ENCODE measurements at regions of chr3 and their contacts with region 1.

Region 1: GRCh38 chr3:188148318-188148717 is 5.6 kb upstream of the LPP start:
- DNase-seq: no peak
- ATAC-seq: no peak
- H3K4me3 ChIP-seq: no peak overlapping the region
- H3K27ac ChIP-seq: no peak overlapping the region
- H3K4me1 ChIP-seq: peaks cover 0 to 21% (median 8%) of the 10 kb centered on the region in 12 donors
- H3K27me3 ChIP-seq: no peaks in the 10 kb centered on the region
- CTCF ChIP-seq: no peak
- POLR2A ChIP-seq: no peak

Region 2: GRCh38 chr3:188067932-188068331 is 80.4 kb before region 1 on chr3:
- intact Hi-C with region 1: loop called in 2 of 10 experiments (anchors 5 kb)
- DNase-seq: no peak
- ATAC-seq: no peak
- H3K4me3 ChIP-seq: no peak overlapping the region
- H3K27ac ChIP-seq: no peak overlapping the region
- H3K4me1 ChIP-seq: peaks cover 0 to 10% (median 2%) of the 10 kb centered on the region in 12 donors
- H3K27me3 ChIP-seq: no peaks in the 10 kb centered on the region
- CTCF ChIP-seq: no peak
- POLR2A ChIP-seq: no peak

Region 3: GRCh38 chr3:188578576-188579363 is 430.5 kb after region 1 on chr3:
- intact Hi-C with region 1: no loop called
- DNase-seq: peak; percentile 69 to 80 (median 78)
- ATAC-seq: peak; percentile 95 to 98 (median 96)
- H3K4me3 ChIP-seq: no peak overlapping the region
- H3K27ac ChIP-seq: peak overlapping the region in 11 of 12 donors; percentile 25 to 85 (median 68)
- H3K4me1 ChIP-seq: peaks cover 0 to 48% (median 20%) of the 10 kb centered on the region in 12 donors
- H3K27me3 ChIP-seq: no peaks in the 10 kb centered on the region
- CTCF ChIP-seq: no peak
- POLR2A ChIP-seq: no peak